ENCODE measurements at regions of chr14 and their contacts with region 1.

Region 1: DNA sequence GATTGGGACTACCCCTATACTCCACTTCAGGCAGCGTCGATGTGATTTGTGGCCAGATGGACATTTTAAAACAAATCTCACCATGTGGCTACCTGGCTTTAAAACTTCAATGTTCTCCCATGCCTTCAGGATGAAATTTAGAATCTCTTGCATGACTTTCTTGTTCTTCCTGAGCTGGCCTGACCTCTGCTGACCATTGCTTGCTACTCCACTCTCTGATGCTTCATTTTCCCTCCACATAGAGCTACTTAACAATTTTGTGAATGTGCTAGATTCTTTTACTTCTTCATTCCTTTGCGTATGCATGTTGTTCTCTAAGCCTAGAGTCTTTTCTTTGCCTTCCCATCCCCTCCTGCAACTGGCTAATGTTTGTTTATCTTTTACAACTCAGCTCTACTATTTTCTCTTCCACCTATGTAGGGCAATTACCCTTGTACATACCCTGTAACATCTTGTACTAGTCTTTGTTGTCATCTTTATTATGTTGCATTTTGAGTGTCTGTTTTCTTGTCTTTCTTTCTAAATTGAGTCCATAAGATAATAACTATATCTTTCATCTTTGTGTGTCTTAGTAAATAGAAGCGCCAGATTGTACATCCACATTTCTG is 41.2 kb downstream of the YLPM1 start:
- DNase-seq: peak; percentile 36
- CTCF ChIP-seq: peak; percentile 58

Region 2: DNA sequence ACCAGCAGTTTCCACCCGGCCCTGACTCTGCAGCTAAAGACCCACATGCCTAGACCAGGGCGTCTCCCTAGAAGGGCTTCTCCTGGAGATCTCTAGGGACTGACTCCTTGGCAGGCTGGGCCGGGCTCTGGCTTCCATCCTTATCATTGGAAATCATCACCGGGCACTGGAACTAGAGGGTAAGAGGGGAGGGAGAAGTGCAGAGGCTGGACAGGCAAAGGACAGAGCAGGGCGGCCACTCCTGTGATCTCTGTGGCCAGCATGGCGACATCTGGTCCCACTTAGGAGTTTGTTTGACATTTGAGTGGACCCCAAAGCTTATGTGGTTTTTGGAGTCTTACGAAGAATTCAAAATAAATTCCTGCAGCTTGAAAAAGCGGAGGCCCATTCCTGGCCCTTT is 199.4 kb before region 1 on chr14:
- CTCF ChIA-PET with region 1: interaction called, 41 read pairs
- POLR2A ChIA-PET with region 1: no interaction called
- DNase-seq: no peak
- CTCF ChIP-seq: no peak

Region 3: GRCh38 chr14:74784634-74785033 is 19.7 kb before region 1 on chr14:
- CTCF ChIA-PET with region 1: interaction called, 12 read pairs
- POLR2A ChIA-PET with region 1: no interaction called
- DNase-seq: no peak
- CTCF ChIP-seq: no peak

Region 4: GRCh38 chr14:74793506-74794168 is 10.7 kb before region 1 on chr14:
- CTCF ChIA-PET with region 1: interaction called, 10 read pairs
- POLR2A ChIA-PET with region 1: no interaction called
- DNase-seq: no peak
- CTCF ChIP-seq: no peak